ENCODE measurements at regions of chr20 and their contacts with region 1.

Region 1: GRCh38 chr20:49132995-49133478 is 55.1 kb downstream of the STAU1 start:
- DNase-seq: peak; percentile 12
- H3K4me3 ChIP-seq: no peak overlapping the region
- CTCF ChIP-seq: peak; percentile 27

Region 2: GRCh38 chr20:49122920-49123319 is 10.1 kb before region 1 on chr20:
- CTCF ChIA-PET with region 1: interaction called, 12 read pairs
- POLR2A ChIA-PET with region 1: no interaction called
- DNase-seq: no peak
- H3K4me3 ChIP-seq: no peak overlapping the region
- CTCF ChIP-seq: no peak

Region 3: GRCh38 chr20:49148601-49149000 is 15.6 kb after region 1 on chr20:
- CTCF ChIA-PET with region 1: interaction called, 18 read pairs
- POLR2A ChIA-PET with region 1: no interaction called
- DNase-seq: no peak
- H3K4me3 ChIP-seq: no peak overlapping the region
- CTCF ChIP-seq: no peak